Activated naive CD8-positive, alpha-beta T cell treated with anti-CD3 and anti-CD28 coated beads, Interleukin-2, amount 10 ng/mL, durations not matched to agents 7 days and 5 days (primary cell): ENCODE measurements at regions of chr12 and their contacts with region 1.

Region 1: GRCh38 chr12:15532364-15532977 is 210.2 kb downstream of the PTPRO start:
- DNase-seq: no peak
- ATAC-seq: peak; percentile 50
- H3K4me3 Mint-ChIP-seq: peak overlapping the region; percentile 37
- H3K27ac Mint-ChIP-seq: no peak overlapping the region
- H3K4me1 Mint-ChIP-seq: peaks cover 12% of the 10 kb centered on the region
- H3K27me3 Mint-ChIP-seq: peaks cover 4% of the 10 kb centered on the region

Region 2: DNA sequence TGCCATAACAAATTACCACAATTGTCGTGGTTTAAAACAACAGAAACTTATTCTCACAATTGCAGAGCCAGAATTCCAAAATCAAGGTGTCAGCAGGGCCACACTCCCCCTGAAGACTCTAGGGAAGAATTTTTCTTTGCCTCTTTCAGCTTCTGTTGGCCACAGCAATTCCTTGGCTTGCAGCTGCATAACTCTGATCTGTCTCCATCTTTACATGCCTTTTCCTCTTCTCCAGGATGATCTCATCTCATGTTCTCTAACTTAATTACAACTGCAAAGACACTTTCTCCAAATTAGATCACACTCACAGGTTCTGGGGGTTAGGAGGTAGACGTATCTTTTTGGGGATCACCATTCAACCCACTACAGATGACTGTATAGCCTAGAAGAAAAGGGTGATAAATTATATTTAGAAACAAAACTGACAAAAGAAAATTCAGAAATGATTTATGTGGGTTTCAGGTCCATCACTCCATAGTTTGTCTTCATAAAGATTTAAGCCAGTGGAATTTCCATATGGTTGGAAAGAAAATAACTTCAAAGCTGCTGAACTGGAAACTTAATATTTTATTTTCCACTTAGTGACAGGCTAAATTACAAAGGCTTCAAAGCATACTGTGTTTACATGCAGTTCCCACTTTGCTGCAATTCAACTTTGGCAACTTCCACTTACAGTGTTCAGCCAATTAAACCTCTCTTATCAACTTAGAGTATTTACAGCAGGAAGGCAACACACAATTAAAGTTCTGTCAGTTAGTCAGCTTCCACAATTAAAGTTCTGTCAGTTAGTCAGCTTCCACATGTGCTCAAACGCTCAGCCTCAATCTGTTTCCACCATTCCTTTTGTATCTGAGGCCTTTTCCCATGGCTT is 43.4 kb after region 1 on chr12:
- POLR2A ChIA-PET with region 1: interaction called, 14 read pairs
- DNase-seq: no peak
- ATAC-seq: no peak
- H3K4me3 Mint-ChIP-seq: no peak overlapping the region
- H3K27ac Mint-ChIP-seq: peak overlapping the region; percentile 57
- H3K4me1 Mint-ChIP-seq: peaks cover 27% of the 10 kb centered on the region
- H3K27me3 Mint-ChIP-seq: no peaks in the 10 kb centered on the region